GM12878 (cell line): ENCODE measurements at regions of chr16 and their contacts with region 1.

Region 1: DNA sequence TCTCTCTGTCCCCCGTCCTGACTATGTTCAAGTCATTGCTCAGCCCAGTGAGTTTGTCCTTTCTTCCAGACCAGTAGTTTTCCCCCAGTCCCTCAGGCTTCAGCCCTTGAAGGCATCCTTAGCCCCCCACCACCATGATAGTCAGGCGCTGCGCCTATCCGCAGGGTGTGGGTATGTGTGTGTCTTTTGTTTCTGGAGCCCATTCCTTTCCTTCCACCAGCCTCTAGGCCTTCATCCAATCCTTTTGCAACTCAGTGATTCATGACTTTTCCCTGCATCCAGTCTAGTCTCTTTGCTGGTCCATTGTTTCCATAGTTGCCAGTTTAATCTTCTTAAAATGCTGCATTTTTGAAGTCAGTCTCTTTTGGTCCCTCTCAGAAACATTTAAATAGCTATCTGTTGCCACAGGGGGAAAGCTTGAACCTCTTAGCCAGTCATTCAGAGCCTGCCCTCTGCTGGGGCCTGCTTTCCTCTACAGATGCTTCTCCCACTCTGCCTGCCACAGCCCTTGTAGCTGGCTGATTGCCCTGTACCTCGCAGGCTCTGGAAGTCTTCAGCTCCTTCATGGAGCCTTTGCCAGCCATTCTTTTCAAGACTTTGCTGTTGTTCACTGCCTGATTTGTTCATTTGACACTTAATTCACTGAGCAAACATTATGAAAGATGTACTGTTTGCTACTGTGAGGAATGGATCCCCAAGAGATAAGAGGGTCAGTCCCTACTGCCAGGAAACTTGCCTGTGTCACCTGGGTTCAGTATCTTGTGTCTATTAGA is 55.9 kb upstream of the ADCY7 start:
- DNase-seq: peak; percentile 48
- ATAC-seq: peak; percentile 100
- H3K4me3 ChIP-seq: no peak overlapping the region
- H3K27ac ChIP-seq: peak overlapping the region; percentile 61
- H3K4me1 ChIP-seq: peaks cover 18% of the 10 kb centered on the region
- H3K27me3 ChIP-seq: no peaks in the 10 kb centered on the region
- CTCF ChIP-seq: peak; percentile 81 to 92 (median 83)
- EP300 ChIP-seq: no peak
- POLR2A ChIP-seq: no peak
- RAD21 ChIP-seq: peak; percentile 82

Region 2: GRCh38 chr16:50024684-50025536 is 185.5 kb before region 1 on chr16 and contains the start of gene CNEP1R1:
- CTCF ChIA-PET with region 1: interaction called, 216 read pairs
- POLR2A ChIA-PET with region 1: interaction called, 10 read pairs
- RAD21 ChIA-PET with region 1: interaction called, 191 read pairs
- SMC1A ChIA-PET with region 1: interaction called, 137 read pairs
- in situ Hi-C with region 1: loop called (anchors 5 kb)
- intact Hi-C with region 1: loop called (anchors 1 kb)
- DNase-seq: peak; percentile 93
- ATAC-seq: peak; percentile 98
- H3K4me3 ChIP-seq: peak within 1 kb of the TSS; percentile 76
- H3K27ac ChIP-seq: peak within 1 kb of the TSS; percentile 64
- H3K4me1 ChIP-seq: 0 out of 2 replicates have a peak, but pooled peaks cover 3% of the 10 kb centered on the region
- H3K27me3 ChIP-seq: no peaks in the 10 kb centered on the region
- CTCF ChIP-seq: peak; percentile 100; a peak in 5 of 6 replicates
- EP300 ChIP-seq: no peak
- POLR2A ChIP-seq: peak; percentile 84
- RAD21 ChIP-seq: peak; percentile 82
- polyA plus RNA-seq, gene CNEP1R1: 11.5 to 15.7 TPM

Region 3: DNA sequence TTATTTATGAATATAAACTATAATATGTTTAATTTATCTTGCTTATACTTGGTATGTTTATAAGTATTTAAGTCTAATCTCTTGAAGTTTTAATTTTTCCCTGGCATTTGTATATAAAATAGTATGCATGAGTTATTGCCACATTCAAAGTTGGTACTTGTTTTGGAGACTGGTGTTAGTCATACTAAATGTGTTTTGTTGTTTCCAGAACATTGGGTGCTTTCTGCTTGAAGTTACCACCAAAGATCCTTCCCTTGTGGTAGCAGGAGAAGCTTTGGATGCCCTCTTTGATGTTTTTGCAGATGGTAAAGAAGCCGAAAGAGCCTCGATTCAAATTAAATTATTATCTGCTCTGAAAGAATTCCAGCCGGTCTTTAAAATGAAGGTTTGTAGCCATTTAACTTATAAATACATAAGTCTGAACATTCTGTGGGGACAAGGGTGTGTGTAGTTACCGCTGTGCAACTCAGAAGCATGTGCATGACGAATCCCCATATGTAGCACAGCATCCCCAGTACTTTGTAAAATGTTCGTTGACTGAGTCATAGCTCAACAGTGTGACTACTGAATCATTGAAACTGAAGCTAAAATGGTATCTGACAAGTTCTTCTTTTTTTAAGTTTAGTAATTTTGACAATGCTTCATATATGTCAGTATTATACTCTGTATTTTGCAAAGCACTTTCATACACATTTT is 108.3 kb before region 1 on chr16:
- CTCF ChIA-PET with region 1: interaction called, 7 read pairs
- POLR2A ChIA-PET with region 1: no interaction called
- RAD21 ChIA-PET with region 1: interaction called, 3 read pairs
- SMC1A ChIA-PET with region 1: interaction called, 10 read pairs
- in situ Hi-C with region 1: no loop called
- intact Hi-C with region 1: no loop called
- DNase-seq: no peak
- ATAC-seq: peak; percentile 71
- H3K4me3 ChIP-seq: no peak overlapping the region
- H3K27ac ChIP-seq: no peak overlapping the region
- H3K4me1 ChIP-seq: no peaks in the 10 kb centered on the region
- H3K27me3 ChIP-seq: no peaks in the 10 kb centered on the region
- CTCF ChIP-seq: no peak
- EP300 ChIP-seq: no peak
- POLR2A ChIP-seq: no peak
- RAD21 ChIP-seq: no peak

Region 4: GRCh38 chr16:50146479-50147435 is 63.7 kb before region 1 on chr16:
- CTCF ChIA-PET with region 1: interaction called, 14 read pairs
- POLR2A ChIA-PET with region 1: interaction called, 3 read pairs
- RAD21 ChIA-PET with region 1: interaction called, 11 read pairs
- SMC1A ChIA-PET with region 1: interaction called, 13 read pairs
- in situ Hi-C with region 1: no loop called
- intact Hi-C with region 1: no loop called
- DNase-seq: no peak
- ATAC-seq: no peak
- H3K4me3 ChIP-seq: no peak overlapping the region
- H3K27ac ChIP-seq: no peak overlapping the region
- H3K4me1 ChIP-seq: peaks cover 4% of the 10 kb centered on the region
- H3K27me3 ChIP-seq: no peaks in the 10 kb centered on the region
- CTCF ChIP-seq: no peak
- EP300 ChIP-seq: no peak
- POLR2A ChIP-seq: no peak
- RAD21 ChIP-seq: no peak

Region 5: DNA sequence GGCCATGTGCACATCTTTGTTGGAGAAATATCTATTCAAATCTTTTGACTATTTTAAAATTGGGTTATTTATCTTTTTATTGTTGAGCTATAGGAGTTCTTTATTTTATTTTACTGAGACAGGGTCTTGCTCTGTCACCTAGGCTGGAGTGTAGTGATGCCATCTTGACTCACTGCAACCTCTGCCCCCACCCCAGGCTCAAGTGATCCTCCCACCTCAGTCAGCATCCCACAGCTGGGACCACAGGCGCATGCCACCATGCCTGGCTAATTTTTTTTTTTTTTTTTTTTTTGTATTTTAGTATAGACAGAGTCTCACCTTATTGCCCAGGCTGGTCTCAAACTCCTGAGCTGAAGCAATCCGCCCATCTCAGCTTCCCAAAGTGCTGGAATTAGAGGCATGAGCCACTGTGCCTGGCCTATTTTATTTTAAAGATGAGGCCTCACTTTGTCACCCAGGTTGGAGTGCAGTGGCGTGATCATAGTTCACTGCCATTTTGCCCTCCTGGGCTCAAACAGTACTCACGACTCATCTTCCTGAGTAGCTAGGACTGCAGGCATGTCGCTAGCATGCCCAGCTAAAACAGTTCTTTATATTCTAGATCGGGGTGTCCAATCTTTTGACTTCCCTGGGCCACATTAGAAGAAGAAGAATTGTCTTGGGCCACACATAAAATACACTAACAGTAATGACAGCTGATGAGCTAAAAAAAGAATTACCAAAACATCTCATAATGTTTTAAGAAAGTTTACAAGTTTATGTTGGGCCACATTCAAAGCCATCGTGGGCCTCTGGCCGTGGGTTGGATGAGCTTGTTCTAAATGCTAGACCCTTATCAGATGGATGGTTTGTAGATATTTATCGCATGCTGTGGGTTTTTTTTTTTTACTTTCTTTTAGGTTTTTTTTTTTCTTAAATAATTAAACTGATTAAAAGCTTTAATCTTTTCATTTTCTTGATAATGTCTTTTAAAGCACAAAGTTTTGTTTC is 43.6 kb before region 1 on chr16:
- CTCF ChIA-PET with region 1: interaction called, 35 read pairs
- POLR2A ChIA-PET with region 1: no interaction called
- RAD21 ChIA-PET with region 1: interaction called, 18 read pairs
- SMC1A ChIA-PET with region 1: interaction called, 14 read pairs
- in situ Hi-C with region 1: no loop called
- intact Hi-C with region 1: no loop called
- DNase-seq: no peak
- ATAC-seq: no peak
- H3K4me3 ChIP-seq: peak overlapping the region; percentile 15; the same call in 1 of the 2 replicates
- H3K27ac ChIP-seq: peak overlapping the region; percentile 9; the same call in 1 of the 2 replicates
- H3K4me1 ChIP-seq: peaks cover 6% of the 10 kb centered on the region; the same call in 1 of the 2 replicates
- H3K27me3 ChIP-seq: no peaks in the 10 kb centered on the region
- CTCF ChIP-seq: no peak
- EP300 ChIP-seq: no peak
- POLR2A ChIP-seq: no peak
- RAD21 ChIP-seq: no peak

Region 6: DNA sequence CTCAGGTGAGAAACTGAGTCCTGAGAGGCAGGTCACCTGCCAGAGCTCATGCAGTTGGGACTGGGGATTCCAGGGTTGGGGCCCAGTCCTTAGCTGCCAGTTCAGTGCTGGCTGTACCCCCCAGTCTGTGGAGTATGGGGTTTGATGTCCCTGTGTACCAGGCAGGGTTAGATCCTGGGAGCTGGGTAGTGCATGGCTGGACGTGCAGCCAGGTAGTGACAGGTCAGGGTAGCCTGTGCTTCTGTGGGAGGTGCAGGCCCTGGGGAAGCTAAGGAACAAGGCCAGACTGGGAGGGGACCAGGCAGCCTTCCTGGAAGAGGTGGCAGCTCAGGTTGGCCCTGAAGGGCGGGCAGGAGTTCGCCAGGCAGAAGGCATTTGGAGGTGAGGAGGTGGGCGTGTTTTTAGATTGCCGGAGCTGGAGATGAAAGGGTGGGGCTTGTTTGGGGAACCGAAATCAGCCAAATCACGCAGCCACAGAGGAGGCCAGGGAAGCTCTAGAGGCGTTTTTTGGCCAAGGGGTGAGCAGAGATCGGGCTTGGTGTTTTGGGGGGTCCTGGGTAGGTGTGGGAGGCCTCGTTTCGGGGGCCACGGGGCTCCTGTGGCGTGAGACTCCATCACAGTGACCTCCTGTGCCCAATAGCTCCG is 63.4 kb after region 1 on chr16:
- CTCF ChIA-PET with region 1: interaction called, 9 read pairs
- POLR2A ChIA-PET with region 1: interaction called, 3 read pairs
- RAD21 ChIA-PET with region 1: interaction called, 9 read pairs
- SMC1A ChIA-PET with region 1: interaction called, 13 read pairs
- in situ Hi-C with region 1: no loop called
- intact Hi-C with region 1: no loop called
- DNase-seq: peak; percentile 64
- ATAC-seq: peak; percentile 80
- H3K4me3 ChIP-seq: peak overlapping the region; percentile 70
- H3K27ac ChIP-seq: peak overlapping the region; percentile 93
- H3K4me1 ChIP-seq: peaks cover 49% of the 10 kb centered on the region
- H3K27me3 ChIP-seq: no peaks in the 10 kb centered on the region
- CTCF ChIP-seq: no peak
- EP300 ChIP-seq: peak in 1 of 2 experiments; percentile 47; a peak in 2 of 4 replicates
- POLR2A ChIP-seq: peak; percentile 59
- RAD21 ChIP-seq: no peak

Region 7: DNA sequence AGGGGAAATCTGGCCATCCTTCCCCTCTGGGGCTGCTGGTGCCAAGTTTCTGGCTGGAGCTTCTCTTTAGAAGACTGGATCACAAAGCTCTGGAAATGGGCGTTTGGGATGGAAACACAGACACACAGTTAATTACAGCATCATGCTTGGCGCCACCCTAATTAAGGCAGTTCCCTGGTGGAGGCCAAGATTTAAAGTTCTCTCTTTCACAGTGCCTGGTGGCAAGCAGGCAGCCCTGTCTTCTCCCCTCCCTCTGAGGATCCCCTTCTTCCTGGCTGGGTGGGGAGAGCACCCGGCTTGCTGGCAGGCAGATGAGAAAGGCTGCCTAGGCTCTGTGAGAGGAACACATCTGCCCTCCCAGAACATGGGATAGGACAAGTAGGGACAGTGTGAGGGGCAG is 278.7 kb after region 1 on chr16:
- CTCF ChIA-PET with region 1: no interaction called
- POLR2A ChIA-PET with region 1: no interaction called
- RAD21 ChIA-PET with region 1: no interaction called
- SMC1A ChIA-PET with region 1: no interaction called
- in situ Hi-C with region 1: no loop called
- intact Hi-C with region 1: no loop called
- DNase-seq: no peak
- ATAC-seq: no peak
- H3K4me3 ChIP-seq: no peak overlapping the region
- H3K27ac ChIP-seq: no peak overlapping the region
- H3K4me1 ChIP-seq: no peaks in the 10 kb centered on the region
- H3K27me3 ChIP-seq: no peaks in the 10 kb centered on the region
- CTCF ChIP-seq: no peak
- EP300 ChIP-seq: no peak
- POLR2A ChIP-seq: no peak
- RAD21 ChIP-seq: no peak

Region 8: DNA sequence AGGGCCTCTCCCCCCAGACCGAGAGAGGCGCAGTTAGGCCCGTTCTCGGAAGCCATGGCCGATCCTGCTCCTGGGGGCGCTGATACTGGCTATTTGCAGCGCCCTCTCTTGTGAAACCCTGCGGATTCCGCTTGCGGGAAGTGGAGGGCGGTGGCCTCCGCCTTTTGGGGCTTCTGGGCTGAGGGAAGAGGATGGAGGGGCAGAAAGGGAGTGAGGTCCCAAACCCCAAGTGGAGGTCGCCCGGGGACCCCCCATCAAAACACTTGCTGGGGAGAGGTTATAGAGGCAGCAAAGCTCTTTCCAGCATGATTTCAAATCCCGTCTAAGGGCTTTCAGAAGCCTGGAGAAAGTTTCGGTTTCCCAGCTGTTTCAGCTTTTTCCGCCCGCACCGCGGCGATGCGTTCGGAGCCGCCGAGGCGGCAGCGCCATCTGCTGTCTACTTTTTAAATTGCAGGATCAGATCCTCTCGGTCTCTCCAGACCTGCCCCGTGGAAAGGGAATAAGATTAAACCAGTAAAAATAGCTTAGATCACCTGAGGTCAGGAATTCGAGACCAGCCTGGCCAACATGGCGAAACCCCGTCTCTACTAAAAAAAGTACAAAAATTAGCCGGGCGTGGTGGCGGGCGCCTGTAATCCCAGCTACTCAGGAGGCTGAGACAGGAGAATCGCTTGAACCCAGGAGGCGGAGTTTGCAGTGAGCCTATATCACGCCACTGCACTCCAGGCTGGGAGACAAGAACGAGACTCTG is 454.9 kb after region 1 on chr16:
- CTCF ChIA-PET with region 1: interaction called, 14 read pairs
- POLR2A ChIA-PET with region 1: no interaction called
- RAD21 ChIA-PET with region 1: interaction called, 10 read pairs
- SMC1A ChIA-PET with region 1: interaction called, 4 read pairs
- in situ Hi-C with region 1: no loop called
- intact Hi-C with region 1: loop called (anchors 5 kb)
- DNase-seq: no peak
- ATAC-seq: peak; percentile 68
- H3K4me3 ChIP-seq: no peak overlapping the region
- H3K27ac ChIP-seq: no peak overlapping the region
- H3K4me1 ChIP-seq: peaks cover 19% of the 10 kb centered on the region
- H3K27me3 ChIP-seq: no peaks in the 10 kb centered on the region
- CTCF ChIP-seq: peak; percentile 77 to 91 (median 86)
- EP300 ChIP-seq: no peak
- POLR2A ChIP-seq: no peak
- RAD21 ChIP-seq: peak; percentile 83